Left lung (tissue), 14 donors: ENCODE measurements at regions of chr21 and their contacts with region 1.

Region 1: DNA sequence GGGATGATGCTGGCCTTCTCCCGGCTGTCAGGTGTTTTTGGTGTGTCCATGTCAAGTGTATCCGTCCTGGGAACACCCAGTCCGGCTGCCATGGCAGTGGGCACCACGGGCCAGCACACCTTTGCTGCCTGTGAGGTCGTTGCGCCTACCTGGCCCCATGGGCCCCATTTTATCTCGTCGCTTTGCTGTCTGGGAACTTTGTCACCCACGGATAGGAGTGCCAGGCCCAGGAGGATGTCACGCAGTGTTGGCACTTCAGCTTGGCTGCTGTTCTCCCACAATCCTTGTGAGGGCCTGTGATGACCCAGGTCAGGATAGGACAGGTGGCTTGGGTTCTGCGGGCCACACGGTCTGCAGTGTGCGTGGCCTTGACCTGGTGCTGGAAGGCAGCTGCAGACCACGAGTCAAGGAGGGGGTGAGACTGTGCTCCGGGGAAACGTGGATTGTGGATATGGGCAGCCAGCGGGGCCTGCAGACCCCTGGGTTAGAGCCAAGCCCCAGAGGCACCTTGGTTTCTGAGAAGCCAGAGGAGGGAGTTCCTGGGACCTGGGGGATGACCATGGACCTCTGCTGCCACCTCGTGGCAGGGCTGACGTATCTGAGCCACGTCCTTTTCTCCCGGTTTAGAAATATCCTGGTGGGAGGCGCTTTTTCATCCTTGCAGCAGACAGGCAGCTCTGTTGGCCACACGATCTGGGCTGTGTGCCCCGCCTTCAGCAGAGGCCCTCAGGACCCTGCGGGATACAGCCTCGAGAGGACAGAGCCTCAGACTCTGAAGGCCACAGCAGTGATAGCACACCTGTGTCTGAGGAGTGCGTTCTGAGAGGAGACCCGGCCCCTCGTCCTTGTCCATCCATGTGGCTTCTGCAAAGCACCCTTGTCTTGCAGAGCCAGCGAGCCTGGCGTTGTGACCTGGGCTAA is 161.1 kb upstream of the COL6A1 start:
- DNase-seq: peak; percentile 72 to 93 (median 85)
- ATAC-seq: peak; percentile 95
- H3K4me3 ChIP-seq: no peak overlapping the region
- H3K27ac ChIP-seq: no peak overlapping the region
- H3K4me1 ChIP-seq: peaks cover 0 to 23% of the 10 kb centered on the region in 2 donors
- H3K27me3 ChIP-seq: peaks cover 0 to 9% of the 10 kb centered on the region in 2 donors
- CTCF ChIP-seq: peak; percentile 76 to 82

Region 2: DNA sequence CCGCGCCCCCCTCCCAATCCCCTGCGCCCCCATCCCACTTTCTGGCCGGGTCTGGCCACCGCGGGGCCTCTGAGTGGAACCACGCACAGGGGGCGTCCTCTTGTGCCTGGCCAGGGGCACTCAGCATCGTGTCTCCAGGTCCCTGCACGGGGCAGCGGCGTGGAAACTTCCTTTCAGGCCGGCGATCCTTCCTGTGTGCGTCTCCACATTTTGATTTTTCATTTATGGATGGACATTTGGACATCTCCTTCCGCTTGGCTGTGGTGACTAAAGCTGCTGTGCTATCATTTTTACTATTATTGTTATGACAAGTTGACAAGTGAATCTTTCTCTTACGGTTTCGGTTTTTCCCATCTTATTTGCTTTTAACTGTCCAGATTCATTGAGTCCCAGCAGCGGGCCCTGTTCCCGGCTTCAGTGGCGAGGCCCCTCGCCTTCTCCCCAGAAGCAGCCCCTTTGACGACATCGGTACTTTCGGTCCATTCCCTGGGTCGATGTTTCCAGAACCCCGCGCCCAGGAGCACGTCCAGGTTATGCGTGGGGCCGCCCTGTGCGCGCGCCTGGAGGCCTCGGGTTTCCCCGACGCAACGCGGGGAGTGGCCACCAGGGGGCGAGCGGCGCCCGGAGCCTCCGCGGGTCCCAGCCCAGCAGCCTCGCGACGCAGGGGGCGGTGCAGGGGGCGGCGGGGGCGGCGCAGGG is 265.8 kb before region 1 on chr21:
- intact Hi-C with region 1: loop called in 1 of 2 experiments (anchors 10 kb)
- DNase-seq: peak; percentile 87 to 98 (median 88)
- ATAC-seq: peak; percentile 83
- H3K4me3 ChIP-seq: peak overlapping the region; percentile 43 to 53
- H3K27ac ChIP-seq: peak overlapping the region; percentile 81 to 85
- H3K4me1 ChIP-seq: peaks cover 0 to 42% of the 10 kb centered on the region in 2 donors
- H3K27me3 ChIP-seq: peaks cover 0 to 9% of the 10 kb centered on the region in 2 donors
- CTCF ChIP-seq: peak; percentile 81 to 93

Region 3: GRCh38 chr21:45721671-45722070 is 98.8 kb before region 1 on chr21:
- intact Hi-C with region 1: no loop called
- DNase-seq: no peak
- ATAC-seq: no peak
- H3K4me3 ChIP-seq: no peak overlapping the region
- H3K27ac ChIP-seq: no peak overlapping the region
- H3K4me1 ChIP-seq: no peaks in the 10 kb centered on the region
- H3K27me3 ChIP-seq: no peaks in the 10 kb centered on the region
- CTCF ChIP-seq: no peak